ENCODE measurements at regions of chr17 and their contacts with region 1.

Region 1: DNA sequence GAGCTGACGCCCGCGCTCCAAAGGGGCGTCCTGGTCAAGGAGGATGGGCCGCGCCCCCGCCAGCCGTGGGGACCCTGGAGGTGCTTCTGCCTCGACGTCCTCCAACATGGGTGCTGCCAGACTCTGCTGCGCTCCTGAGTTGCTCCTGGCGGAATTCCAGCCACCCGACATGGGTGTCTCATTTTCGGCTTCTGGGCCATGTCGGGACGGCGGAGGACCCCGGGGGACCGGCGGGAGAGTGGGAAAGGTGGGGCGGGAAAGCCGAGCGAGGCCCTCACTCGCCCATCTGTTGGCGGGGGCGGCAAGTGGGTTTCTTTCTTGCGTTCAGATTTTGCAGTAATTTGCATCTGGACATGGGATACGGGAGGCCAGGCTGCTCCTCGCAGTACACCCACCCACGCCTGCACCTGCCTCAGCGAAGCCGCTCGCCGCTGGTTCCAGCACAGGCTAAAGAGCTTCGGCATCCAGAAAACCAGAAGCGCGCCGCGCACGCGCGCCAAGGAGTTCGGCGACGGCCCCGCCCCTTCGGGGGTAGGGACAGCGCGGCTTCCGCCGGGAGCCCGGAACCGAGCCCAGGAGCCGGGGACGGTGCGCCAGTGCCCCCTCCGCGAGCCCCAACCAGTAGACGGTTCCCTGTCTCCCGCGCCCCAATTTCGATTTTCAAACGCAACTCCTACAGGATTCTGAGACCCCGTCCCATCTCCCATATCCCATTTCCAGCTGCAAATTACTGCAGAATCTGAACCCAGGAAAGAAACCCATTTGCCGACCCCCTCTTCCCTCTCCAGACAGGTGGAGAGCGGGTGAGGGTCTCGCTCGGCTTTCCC is at the start of gene ARMC7:
- DNase-seq: peak; percentile 92 to 95
- H3K4me3 ChIP-seq: peak within 1 kb of the TSS; percentile 66
- H3K4me3 Mint-ChIP-seq: peak within 1 kb of the TSS; percentile 86
- H3K27ac Mint-ChIP-seq: no peak within 1 kb of the TSS
- H3K4me1 ChIP-seq: peaks cover 8% of the 10 kb centered on the region
- H3K4me1 Mint-ChIP-seq: peaks cover 19% of the 10 kb centered on the region
- H3K27me3 ChIP-seq: no peaks in the 10 kb centered on the region
- H3K27me3 Mint-ChIP-seq: no peaks in the 10 kb centered on the region
- CTCF ChIP-seq: no peak
- total RNA-seq, gene ARMC7: 23.6 and 26.0 TPM in 2 replicates

Region 2: DNA sequence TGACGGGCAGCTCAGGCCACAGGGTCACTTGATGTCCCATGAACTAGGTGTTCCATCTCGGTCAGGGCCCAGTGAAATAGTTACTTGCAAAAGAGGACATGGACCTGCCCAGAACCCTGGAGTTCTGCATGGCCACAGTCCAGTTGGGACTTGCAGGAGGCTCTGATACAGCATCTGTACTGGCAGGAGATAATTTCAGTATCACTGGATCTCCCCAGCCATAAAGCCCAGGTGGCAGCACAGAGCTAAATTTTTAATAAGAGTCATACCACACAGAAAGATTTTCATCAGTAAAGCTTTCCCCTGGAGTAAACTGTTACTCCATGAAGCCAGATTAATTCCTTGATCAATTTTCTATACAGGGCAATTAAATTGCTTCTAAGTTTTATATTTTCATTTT is 39.8 kb before region 1 on chr17:
- CTCF ChIA-PET with region 1: interaction called, 13 read pairs
- POLR2A ChIA-PET with region 1: interaction called, 4 read pairs
- intact Hi-C with region 1: loop called (anchors 5 kb)
- DNase-seq: peak in 1 of 2 experiments; percentile 51
- H3K4me3 ChIP-seq: no peak overlapping the region
- H3K4me3 Mint-ChIP-seq: no peak overlapping the region
- H3K27ac Mint-ChIP-seq: no peak overlapping the region
- H3K4me1 ChIP-seq: no peaks in the 10 kb centered on the region
- H3K4me1 Mint-ChIP-seq: peaks cover 7% of the 10 kb centered on the region
- H3K27me3 ChIP-seq: no peaks in the 10 kb centered on the region
- H3K27me3 Mint-ChIP-seq: no peaks in the 10 kb centered on the region
- CTCF ChIP-seq: peak; percentile 16 to 34

Region 3: GRCh38 chr17:75096082-75096625 is 13.5 kb before region 1 on chr17:
- CTCF ChIA-PET with region 1: interaction called, 7 read pairs
- POLR2A ChIA-PET with region 1: interaction called, 3 read pairs
- intact Hi-C with region 1: loop called (anchors 2 kb)
- DNase-seq: peak; percentile 80 to 92
- H3K4me3 ChIP-seq: no peak overlapping the region
- H3K4me3 Mint-ChIP-seq: peak overlapping the region; percentile 36
- H3K27ac Mint-ChIP-seq: peak overlapping the region; percentile 95
- H3K4me1 ChIP-seq: peaks cover 50% of the 10 kb centered on the region
- H3K4me1 Mint-ChIP-seq: peaks cover 52% of the 10 kb centered on the region
- H3K27me3 ChIP-seq: no peaks in the 10 kb centered on the region
- H3K27me3 Mint-ChIP-seq: no peaks in the 10 kb centered on the region
- CTCF ChIP-seq: no peak

Region 4: DNA sequence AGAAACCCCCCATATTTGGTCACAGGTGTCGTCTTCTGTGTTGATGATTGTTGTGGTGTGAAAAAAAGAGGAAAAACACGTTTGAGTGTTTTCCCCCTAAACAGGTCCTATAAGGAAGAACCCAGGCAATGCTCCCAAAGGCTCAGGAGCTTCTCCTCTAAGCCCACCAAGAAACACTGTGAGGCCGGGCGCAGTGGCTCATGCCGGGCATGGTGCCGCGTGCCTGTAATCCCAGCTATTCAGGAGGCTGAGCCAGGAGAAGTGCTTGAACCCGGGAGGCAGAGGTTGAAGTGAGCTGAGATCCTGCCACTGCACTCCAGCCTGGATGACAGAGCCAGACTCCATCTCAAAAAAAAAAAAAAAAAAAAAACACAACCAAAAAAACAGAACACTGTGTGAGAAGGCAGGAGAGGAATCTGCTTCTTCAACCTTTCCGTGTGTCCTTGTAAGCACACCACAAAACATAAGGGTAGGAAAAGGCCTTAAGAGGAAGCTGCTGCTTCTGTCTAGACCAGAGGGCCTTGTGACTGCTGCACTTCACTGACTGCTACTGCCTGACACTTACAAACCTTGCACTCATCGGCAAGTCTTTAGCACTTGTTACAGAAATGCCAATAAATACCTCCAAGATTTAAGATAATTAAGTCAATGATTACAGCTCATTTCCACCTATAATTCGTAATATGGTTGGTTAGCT is 35.3 kb after region 1 on chr17:
- CTCF ChIA-PET with region 1: interaction called, 12 read pairs
- POLR2A ChIA-PET with region 1: no interaction called
- intact Hi-C with region 1: no loop called
- DNase-seq: peak in 1 of 2 experiments; percentile 7
- H3K4me3 ChIP-seq: no peak overlapping the region
- H3K4me3 Mint-ChIP-seq: no peak overlapping the region
- H3K27ac Mint-ChIP-seq: no peak overlapping the region
- H3K4me1 ChIP-seq: no peaks in the 10 kb centered on the region
- H3K4me1 Mint-ChIP-seq: peaks cover 6% of the 10 kb centered on the region
- H3K27me3 ChIP-seq: no peaks in the 10 kb centered on the region
- H3K27me3 Mint-ChIP-seq: no peaks in the 10 kb centered on the region
- CTCF ChIP-seq: no peak

Region 5: DNA sequence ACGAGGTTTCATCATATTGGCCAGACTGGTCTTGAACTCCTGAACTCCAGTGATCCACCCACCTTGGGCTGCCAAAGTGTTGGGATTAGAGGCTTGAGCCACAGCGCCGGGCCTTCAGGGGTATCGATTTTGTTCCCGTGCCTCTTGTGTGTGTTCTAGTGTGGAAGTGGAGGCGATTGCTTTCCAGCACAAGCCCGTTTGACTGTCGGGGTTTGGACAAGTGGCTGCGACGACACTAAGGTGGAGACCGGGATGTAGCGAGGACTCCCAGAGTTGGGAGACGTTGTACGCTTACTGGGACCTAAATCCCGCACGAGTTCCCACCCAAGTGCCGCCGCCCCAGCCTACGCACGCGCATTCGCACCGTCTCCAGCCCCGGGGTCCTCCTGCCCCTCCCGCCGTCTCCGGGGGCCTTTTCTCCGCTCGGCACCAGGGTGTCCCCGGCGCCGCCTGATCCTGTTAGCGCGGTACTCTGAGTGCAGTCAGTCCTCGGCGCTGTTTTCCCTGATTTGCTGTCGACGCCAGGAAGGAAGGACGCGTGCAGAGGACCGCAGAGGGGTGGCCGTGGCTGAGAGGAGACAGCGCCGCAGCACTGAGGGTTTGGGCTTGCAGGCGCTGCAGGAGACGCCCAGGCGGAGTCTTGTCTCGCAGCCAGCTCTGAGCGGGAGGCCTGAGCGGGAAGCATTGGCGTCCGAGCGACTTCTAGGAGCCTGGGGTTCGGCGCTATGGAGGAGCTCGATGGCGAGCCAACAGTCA is 95.6 kb after region 1 on chr17 and contains the start of gene NUP85:
- CTCF ChIA-PET with region 1: interaction called, 58 read pairs
- POLR2A ChIA-PET with region 1: interaction called, 4 read pairs
- intact Hi-C with region 1: loop called (anchors 1 kb)
- DNase-seq: peak; percentile 98
- H3K4me3 ChIP-seq: peak within 1 kb of the TSS; percentile 92
- H3K4me3 Mint-ChIP-seq: peak within 1 kb of the TSS; percentile 87
- H3K27ac Mint-ChIP-seq: peak within 1 kb of the TSS; percentile 100
- H3K4me1 ChIP-seq: peaks cover 11% of the 10 kb centered on the region; the same call in 1 of the 2 replicates
- H3K4me1 Mint-ChIP-seq: peaks cover 6% of the 10 kb centered on the region
- H3K27me3 ChIP-seq: no peaks in the 10 kb centered on the region
- H3K27me3 Mint-ChIP-seq: no peaks in the 10 kb centered on the region
- CTCF ChIP-seq: no peak
- total RNA-seq, gene NUP85: 119 and 142 TPM in 2 replicates

Region 6: DNA sequence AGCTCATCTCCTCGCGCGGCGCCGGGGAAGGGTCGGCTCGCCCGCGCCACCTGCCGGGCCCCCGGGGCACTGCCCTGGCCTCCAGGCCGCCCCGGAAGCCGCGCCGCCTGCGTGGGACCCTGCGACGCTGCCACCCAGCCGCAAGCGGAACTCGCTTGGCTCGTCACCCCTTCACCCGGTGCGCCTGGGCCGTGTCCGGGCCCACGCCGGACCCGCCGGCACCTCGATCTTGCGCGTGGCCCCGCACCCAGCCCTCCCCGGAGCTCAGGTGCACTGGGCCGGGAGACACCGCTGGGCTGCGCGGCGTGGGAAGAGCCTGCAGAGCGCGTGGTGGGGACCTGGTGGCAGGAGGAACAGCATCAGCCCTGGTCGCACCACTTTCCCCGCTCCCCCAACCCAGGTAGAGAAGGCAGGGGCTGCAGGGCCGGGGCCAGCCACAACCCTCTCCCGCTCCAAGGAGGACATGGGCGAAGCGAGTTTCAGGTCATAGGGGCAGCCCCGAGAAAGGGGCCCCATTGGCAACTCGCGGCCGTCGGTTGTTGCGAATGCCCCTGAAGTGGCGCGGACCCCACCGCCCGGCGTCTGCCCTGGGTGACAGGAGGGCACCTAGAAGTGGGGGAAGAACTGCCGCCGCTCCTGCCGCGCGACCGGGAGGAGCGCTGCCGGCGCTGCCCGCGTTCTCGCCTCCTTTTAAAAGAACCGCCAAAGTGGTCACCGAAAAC is 161.8 kb after region 1 on chr17:
- CTCF ChIA-PET with region 1: interaction called, 12 read pairs
- POLR2A ChIA-PET with region 1: no interaction called
- intact Hi-C with region 1: no loop called
- DNase-seq: peak; percentile 67 to 93
- H3K4me3 ChIP-seq: peak overlapping the region; percentile 97
- H3K4me3 Mint-ChIP-seq: peak overlapping the region; percentile 71
- H3K27ac Mint-ChIP-seq: peak overlapping the region; percentile 1
- H3K4me1 ChIP-seq: peaks cover 14% of the 10 kb centered on the region; the same call in 1 of the 2 replicates
- H3K4me1 Mint-ChIP-seq: peaks cover 15% of the 10 kb centered on the region
- H3K27me3 ChIP-seq: no peaks in the 10 kb centered on the region
- H3K27me3 Mint-ChIP-seq: no peaks in the 10 kb centered on the region
- CTCF ChIP-seq: peak; percentile 41 to 91